Caco-2 (cell line): ENCODE measurements at regions of chr12 and their contacts with region 1.

Region 1: DNA sequence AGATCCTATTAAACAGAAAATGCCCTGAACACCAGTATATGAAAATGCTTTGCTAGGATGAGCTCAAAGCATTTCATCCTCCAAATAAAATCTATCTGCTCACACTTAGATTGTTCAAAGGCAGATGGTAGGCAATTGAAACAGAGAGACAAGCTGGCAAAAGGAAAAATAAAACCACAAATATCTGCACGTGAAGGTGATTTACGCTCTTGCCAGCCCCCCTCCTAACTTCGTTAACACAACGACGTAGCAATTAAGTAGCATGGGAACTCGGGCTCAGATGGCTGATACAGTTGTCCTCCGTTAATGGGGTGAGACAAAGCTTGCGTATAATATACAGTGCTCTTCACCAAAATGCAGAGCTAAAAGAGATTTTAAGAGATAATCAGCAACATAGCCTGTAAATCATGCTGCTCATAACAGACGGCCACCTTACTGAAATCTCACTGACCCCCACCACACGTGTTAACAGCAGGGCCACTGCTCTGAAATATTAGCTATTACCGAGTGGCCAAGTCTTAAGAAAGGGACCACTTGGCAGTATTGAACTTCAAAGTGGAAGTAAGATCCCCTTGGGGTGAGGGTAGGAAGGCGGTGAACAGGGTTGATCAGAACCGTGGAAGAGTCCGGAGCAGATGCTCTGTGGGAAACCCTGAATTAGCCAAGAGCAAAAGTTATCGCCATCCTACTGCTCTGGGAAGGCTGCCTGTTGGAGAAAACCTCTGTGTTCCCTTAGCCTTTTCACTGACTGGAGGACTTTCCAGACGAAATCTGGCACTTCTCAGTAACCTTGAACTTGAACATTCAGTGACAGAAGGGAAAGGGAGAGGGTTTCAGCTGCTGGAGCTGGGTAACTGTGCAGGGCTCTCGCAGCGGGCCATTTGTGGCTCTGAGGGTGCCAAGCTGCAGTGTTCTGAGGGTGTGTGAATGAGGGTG is 23.1 kb downstream of the ETV6 start:
- DNase-seq: no peak
- H3K4me3 ChIP-seq: no peak overlapping the region
- H3K4me3 Mint-ChIP-seq: no peak overlapping the region
- H3K27ac Mint-ChIP-seq: no peak overlapping the region
- H3K4me1 ChIP-seq: no peaks in the 10 kb centered on the region
- H3K4me1 Mint-ChIP-seq: peaks cover 13% of the 10 kb centered on the region
- H3K27me3 ChIP-seq: no peaks in the 10 kb centered on the region
- H3K27me3 Mint-ChIP-seq: peaks cover 2% of the 10 kb centered on the region
- CTCF ChIP-seq: no peak

Region 2: GRCh38 chr12:11648831-11649702 is 23.5 kb before region 1 on chr12 and contains the start of gene ETV6:
- CTCF ChIA-PET with region 1: no interaction called
- POLR2A ChIA-PET with region 1: no interaction called
- intact Hi-C with region 1: no loop called
- DNase-seq: peak; percentile 78 to 85
- H3K4me3 ChIP-seq: peak within 1 kb of the TSS; percentile 79
- H3K4me3 Mint-ChIP-seq: peak within 1 kb of the TSS; percentile 84
- H3K27ac Mint-ChIP-seq: peak within 1 kb of the TSS; percentile 87
- H3K4me1 ChIP-seq: peaks cover 7% of the 10 kb centered on the region; the same call in 1 of the 2 replicates
- H3K4me1 Mint-ChIP-seq: peaks cover 10% of the 10 kb centered on the region
- H3K27me3 ChIP-seq: no peaks in the 10 kb centered on the region
- H3K27me3 Mint-ChIP-seq: no peaks in the 10 kb centered on the region
- CTCF ChIP-seq: no peak
- total RNA-seq, gene ETV6: 15.6 and 18.2 TPM in 2 replicates

Region 3: DNA sequence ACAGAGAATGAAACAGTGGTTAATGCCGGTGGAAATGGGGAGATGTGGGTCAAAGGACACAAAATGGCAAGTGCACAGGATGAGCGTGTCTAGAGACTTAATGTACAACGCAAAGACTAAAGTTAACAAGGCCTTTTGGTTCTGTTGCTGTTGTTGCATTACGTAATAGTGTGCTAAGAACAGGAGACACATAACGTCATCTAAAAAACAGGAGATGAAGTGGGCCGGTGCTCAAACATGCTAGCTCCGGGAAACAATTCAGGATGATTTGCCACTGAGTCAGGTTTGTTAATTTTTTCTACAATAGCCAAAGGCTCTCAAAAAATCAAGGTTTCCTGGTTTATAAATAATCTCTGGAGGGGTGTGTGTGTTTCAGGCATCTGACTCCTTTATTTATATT is 32.5 kb after region 1 on chr12:
- CTCF ChIA-PET with region 1: no interaction called
- POLR2A ChIA-PET with region 1: no interaction called
- intact Hi-C with region 1: loop called (anchors 2 kb)
- DNase-seq: no peak
- H3K4me3 ChIP-seq: no peak overlapping the region
- H3K4me3 Mint-ChIP-seq: no peak overlapping the region
- H3K27ac Mint-ChIP-seq: no peak overlapping the region
- H3K4me1 ChIP-seq: peaks cover 18% of the 10 kb centered on the region
- H3K4me1 Mint-ChIP-seq: peaks cover 18% of the 10 kb centered on the region
- H3K27me3 ChIP-seq: no peaks in the 10 kb centered on the region
- H3K27me3 Mint-ChIP-seq: no peaks in the 10 kb centered on the region
- CTCF ChIP-seq: no peak

Region 4: GRCh38 chr12:11716794-11717518 is 44.4 kb after region 1 on chr12:
- CTCF ChIA-PET with region 1: no interaction called
- POLR2A ChIA-PET with region 1: no interaction called
- intact Hi-C with region 1: no loop called
- DNase-seq: no peak
- H3K4me3 ChIP-seq: no peak overlapping the region
- H3K4me3 Mint-ChIP-seq: no peak overlapping the region
- H3K27ac Mint-ChIP-seq: no peak overlapping the region
- H3K4me1 ChIP-seq: peaks cover 4% of the 10 kb centered on the region; the same call in 1 of the 2 replicates
- H3K4me1 Mint-ChIP-seq: no peaks in the 10 kb centered on the region
- H3K27me3 ChIP-seq: no peaks in the 10 kb centered on the region
- H3K27me3 Mint-ChIP-seq: no peaks in the 10 kb centered on the region
- CTCF ChIP-seq: no peak